Pancreas (tissue), 10 donors: ENCODE measurements at regions of chr10 and their contacts with region 1.

Region 1: GRCh38 chr10:62707810-62708209 is 96.7 kb upstream of the ADO start:
- DNase-seq: no peak
- ATAC-seq: no peak
- H3K4me3 ChIP-seq: no peak overlapping the region
- H3K27ac ChIP-seq: no peak overlapping the region
- H3K4me1 ChIP-seq: no peaks in the 10 kb centered on the region
- H3K27me3 ChIP-seq: no peaks in the 10 kb centered on the region
- CTCF ChIP-seq: no peak

Region 2: GRCh38 chr10:62577666-62578291 is 130.0 kb before region 1 on chr10:
- intact Hi-C with region 1: loop called in 1 of 3 experiments (anchors 5 kb)
- DNase-seq: no peak
- ATAC-seq: no peak
- H3K4me3 ChIP-seq: no peak overlapping the region
- H3K27ac ChIP-seq: no peak overlapping the region
- H3K4me1 ChIP-seq: no peaks in the 10 kb centered on the region
- H3K27me3 ChIP-seq: no peaks in the 10 kb centered on the region
- CTCF ChIP-seq: no peak